Posterior vena cava (tissue), 2 donors: ENCODE measurements at regions of chr10 and their contacts with region 1.

Region 1: GRCh38 chr10:69663369-69663947 is 33.4 kb downstream of the FAM241B start:
- DNase-seq: no peak

Region 2: GRCh38 chr10:69696073-69696731 is 32.7 kb after region 1 on chr10:
- intact Hi-C with region 1: loop called in 1 of 2 experiments (anchors 1 kb)
- DNase-seq: no peak

Region 3: DNA sequence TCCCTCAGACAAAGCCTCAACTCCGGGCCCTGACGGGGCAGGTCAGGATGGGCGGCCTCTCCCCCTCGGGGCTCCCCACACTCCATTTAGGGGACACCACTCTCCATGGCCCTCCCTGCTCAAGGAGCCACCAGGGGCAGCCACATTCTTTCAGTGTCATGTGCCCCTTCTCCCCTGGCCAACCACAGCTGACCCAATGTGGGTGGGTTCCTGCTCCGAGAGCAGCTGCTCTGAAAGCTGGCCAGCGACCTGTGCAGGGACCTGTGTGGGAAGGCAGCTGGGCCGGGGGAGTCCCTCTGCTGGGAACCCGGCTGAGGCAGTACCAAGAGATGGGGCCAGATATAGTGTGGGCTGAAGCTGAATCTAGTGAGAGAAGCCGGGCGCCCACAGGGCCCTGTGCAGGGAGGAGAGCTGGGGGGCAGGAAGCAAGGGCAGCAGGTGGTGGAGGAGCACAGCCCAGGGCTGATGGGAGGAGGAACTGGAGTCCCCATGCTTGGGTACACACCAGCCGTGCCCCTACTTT is 660.9 kb after region 1 on chr10:
- intact Hi-C with region 1: loop called in 1 of 2 experiments (anchors 5 kb)
- DNase-seq: peak; percentile 76